ENCODE measurements at regions of chr2 and their contacts with region 1.

Region 1: DNA sequence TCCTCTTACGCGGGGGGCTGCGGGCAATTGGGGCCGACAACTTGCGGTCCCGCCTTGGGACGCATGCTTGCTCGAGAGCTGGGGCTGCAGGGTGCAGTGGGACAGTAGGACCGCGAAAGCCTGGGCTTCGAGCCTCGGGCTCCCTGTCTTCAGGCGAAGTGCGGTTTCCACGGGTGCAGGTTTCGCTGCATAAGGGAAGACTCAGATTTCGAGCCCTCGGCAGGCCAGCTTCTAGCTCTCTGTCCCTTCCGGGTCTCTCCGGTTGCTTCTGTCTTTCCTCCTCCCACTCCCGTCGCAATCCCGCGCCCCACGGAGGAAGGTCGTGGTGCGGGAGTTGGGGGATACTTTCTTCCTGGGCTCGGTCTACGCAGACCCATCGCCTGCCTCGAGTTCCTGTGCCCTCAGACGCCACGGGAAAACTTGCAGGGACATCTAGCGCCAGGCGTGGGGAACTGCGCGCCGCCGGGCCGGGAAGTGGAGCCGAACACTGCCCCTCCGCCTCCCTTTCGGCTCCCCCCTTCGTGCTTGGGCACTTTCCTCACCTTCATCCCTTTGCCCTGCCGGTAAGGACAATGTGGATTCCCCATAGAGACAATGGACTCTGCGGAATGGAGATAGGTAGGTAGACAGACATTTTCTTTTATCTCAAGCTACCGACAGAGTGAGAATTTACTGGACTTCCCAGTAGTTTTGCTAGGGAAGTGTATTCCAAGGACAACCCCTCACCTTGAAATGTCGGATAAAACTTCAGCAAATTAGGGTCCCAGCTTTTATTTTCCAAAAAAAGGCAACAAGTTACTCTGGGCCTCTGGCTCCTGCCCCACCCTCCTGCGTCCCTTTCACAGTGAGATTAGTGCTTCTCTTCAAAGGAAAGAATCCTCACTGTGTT is 4.2 kb upstream of the HOXD13 start:
- DNase-seq: no peak
- ATAC-seq: peak; percentile 77
- H3K4me3 ChIP-seq: no peak overlapping the region
- H3K27ac ChIP-seq: no peak overlapping the region
- H3K4me1 ChIP-seq: no peaks in the 10 kb centered on the region
- H3K27me3 ChIP-seq: peaks cover 13 to 28% of the 10 kb centered on the region in 2 experiments
- CTCF ChIP-seq: peak; percentile 65 to 75 (median 73)
- EP300 ChIP-seq: no peak
- POLR2A ChIP-seq: no peak
- RAD21 ChIP-seq: peak; percentile 63

Region 2: GRCh38 chr2:175690113-175690837 is 398.0 kb before region 1 on chr2:
- CTCF ChIA-PET with region 1: interaction called, 15 read pairs
- POLR2A ChIA-PET with region 1: no interaction called
- RAD21 ChIA-PET with region 1: interaction called, 9 read pairs
- SMC1A ChIA-PET with region 1: interaction called, 3 read pairs
- in situ Hi-C with region 1: no loop called
- intact Hi-C with region 1: loop called (anchors 2 kb)
- DNase-seq: peak; percentile 4
- ATAC-seq: peak; percentile 81
- H3K4me3 ChIP-seq: no peak overlapping the region
- H3K27ac ChIP-seq: no peak overlapping the region
- H3K4me1 ChIP-seq: no peaks in the 10 kb centered on the region
- H3K27me3 ChIP-seq: 0 out of 4 replicates have a peak, but pooled peaks cover 0 to 1% of the 10 kb centered on the region in 2 experiments
- CTCF ChIP-seq: peak; percentile 62 to 69 (median 69)
- EP300 ChIP-seq: no peak
- POLR2A ChIP-seq: no peak
- RAD21 ChIP-seq: peak; percentile 71

Region 3: DNA sequence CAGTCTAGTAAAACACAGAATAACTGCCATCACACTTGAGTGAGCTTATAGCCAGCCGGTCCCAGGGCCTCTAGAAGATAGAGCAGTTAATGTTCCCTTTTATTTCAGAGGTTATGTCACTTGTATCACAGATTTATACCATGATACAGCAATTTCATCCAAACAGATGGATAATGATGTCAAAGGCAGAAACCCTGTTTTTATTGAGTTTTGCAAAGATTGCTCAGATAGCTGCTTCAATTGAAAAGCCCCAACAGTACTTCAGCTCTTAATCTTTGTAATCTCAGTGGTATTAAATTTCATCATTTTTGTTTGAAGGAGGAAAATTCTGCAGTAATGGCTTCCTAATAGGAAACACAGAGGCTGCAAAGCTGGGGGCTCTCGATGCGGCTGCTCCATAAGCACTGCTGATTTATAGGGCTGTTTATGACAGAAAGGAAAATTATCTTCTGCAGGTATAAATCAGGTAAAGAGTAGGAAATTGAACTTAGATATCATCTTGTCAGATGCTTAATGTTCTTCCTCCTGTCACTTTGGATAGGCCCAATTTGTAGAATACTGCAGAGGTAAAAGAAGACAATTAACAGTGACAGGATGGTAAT is 198.5 kb before region 1 on chr2:
- CTCF ChIA-PET with region 1: no interaction called
- POLR2A ChIA-PET with region 1: no interaction called
- RAD21 ChIA-PET with region 1: no interaction called
- SMC1A ChIA-PET with region 1: no interaction called
- in situ Hi-C with region 1: no loop called
- intact Hi-C with region 1: loop called (anchors 10 kb)
- DNase-seq: no peak
- ATAC-seq: no peak
- H3K4me3 ChIP-seq: no peak overlapping the region
- H3K27ac ChIP-seq: no peak overlapping the region
- H3K4me1 ChIP-seq: no peaks in the 10 kb centered on the region
- H3K27me3 ChIP-seq: no peaks in the 10 kb centered on the region
- CTCF ChIP-seq: no peak
- EP300 ChIP-seq: no peak
- POLR2A ChIP-seq: no peak
- RAD21 ChIP-seq: no peak